Activated T-helper 1 cell treated with anti-CD3 and anti-CD28 coated beads, Interleukin-12 subunit alpha, Interleukin-12 subunit beta, Interleukin-2, Interleukin-4 antibody, amounts not matched to agents 30 ng/mL and 10 ng/mL and 1 ng/mL, durations not matched to agents 14 hours and 24 hours and 36 hours (primary cell): ENCODE measurements at regions of chr12 and their contacts with region 1.

Region 1: GRCh38 chr12:123075646-123076171 is 75.2 kb downstream of the PITPNM2 start:
- DNase-seq: peak; percentile 81
- H3K4me3 Mint-ChIP-seq: peak overlapping the region; percentile 86
- H3K27ac Mint-ChIP-seq: peak overlapping the region; percentile 99
- H3K4me1 Mint-ChIP-seq: peaks cover 57% of the 10 kb centered on the region
- H3K27me3 Mint-ChIP-seq: peaks cover 2% of the 10 kb centered on the region

Region 2: DNA sequence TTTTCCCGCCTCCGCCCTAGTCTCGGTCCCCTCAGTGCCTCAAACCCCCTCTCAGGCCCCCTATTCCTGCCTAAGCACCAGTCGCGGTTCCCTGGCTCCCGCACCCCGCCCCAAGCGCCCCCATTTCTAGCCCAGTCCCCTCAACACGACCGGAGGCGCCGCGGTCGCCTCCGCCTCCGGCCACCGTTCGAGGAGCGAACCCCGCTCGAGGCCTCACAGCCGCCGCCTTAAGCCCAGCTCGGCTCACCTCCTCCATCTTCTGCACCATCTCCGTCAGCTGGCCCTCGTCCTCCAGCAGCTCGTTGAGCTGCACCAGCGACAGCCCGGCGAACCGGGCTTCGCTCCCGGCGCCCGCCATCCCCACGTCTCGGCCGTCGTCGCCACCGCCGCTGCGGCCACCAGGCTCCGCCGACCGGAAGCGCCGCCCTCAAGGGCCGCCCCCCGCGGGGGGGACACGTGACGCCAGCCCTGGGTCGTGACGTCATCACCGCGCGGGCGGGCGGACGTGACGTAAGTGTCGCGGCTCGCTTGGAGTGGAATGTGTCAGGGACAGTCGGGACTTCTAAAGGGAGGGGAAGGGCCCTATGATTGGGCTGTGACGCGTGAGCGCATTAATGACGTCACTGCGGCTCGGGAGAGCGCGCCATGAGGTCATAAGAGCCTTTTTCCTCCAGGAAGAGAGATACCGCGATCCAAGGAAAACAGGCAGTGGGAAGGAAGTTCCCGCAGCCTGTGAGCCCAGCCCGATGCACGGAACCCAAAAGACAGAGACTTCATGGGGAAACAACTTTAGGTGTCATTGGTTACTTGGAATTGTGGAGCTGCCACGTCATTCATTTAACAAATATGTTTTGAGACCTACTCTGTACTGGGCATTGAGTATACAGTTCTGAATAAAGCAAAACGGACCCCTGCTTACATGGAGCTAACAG is 179.7 kb before region 1 on chr12 and contains the start of gene VPS37B:
- intact Hi-C with region 1: loop called (anchors 5 kb)
- DNase-seq: peak; percentile 87
- H3K4me3 Mint-ChIP-seq: peak within 1 kb of the TSS; percentile 91
- H3K27ac Mint-ChIP-seq: peak within 1 kb of the TSS; percentile 91
- H3K4me1 Mint-ChIP-seq: peaks cover 93% of the 10 kb centered on the region
- H3K27me3 Mint-ChIP-seq: peaks cover 5% of the 10 kb centered on the region
- total RNA-seq, gene VPS37B: 12.7 and 14.3 TPM in 2 replicates

Region 3: GRCh38 chr12:123024819-123025391 is 50.8 kb before region 1 on chr12:
- intact Hi-C with region 1: loop called (anchors 1 kb)
- DNase-seq: no peak
- H3K4me3 Mint-ChIP-seq: peak overlapping the region; percentile 9
- H3K27ac Mint-ChIP-seq: peak overlapping the region; percentile 62
- H3K4me1 Mint-ChIP-seq: peaks cover 17% of the 10 kb centered on the region
- H3K27me3 Mint-ChIP-seq: no peaks in the 10 kb centered on the region

Region 4: DNA sequence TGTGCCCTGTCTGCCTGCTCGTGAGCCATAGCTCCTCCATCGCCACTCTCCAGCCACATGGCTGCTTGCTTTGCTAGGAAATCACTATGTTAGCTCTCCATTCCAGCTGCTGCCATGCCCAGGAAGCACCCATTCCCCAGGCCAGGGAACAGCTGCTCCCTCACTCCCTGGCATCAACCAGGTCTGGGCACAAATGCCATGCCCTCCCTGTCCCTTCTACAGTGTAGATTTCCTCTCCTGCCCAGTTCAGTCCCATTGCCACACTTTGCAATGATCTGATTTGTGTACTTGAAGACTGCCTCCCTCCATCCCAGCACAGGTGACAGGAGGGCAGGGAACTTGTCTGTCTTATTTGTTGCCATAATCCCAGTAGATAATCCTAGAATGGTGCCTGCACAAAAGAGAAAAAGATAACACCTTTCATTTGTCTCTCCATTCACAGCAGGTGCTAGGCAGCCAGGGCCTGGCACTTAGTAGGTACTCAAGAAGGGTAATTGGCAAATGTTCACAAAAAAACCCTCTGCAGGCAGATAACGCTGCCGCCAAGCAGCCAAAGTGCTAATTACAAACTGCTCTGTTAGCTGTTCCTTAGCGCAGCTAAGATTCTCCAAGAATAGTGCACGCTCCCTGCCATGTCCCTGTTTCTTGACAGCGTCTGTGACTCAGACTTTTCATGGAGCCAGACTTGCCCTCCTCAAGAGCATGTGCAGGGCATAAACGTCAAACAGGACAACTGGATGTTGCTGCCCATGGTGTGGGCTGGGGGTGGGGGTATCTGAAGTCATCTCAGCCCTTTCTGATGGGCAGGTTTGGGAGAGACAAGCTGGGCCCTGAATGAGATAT is 26.1 kb before region 1 on chr12:
- intact Hi-C with region 1: no loop called
- DNase-seq: no peak
- H3K4me3 Mint-ChIP-seq: no peak overlapping the region
- H3K27ac Mint-ChIP-seq: no peak overlapping the region
- H3K4me1 Mint-ChIP-seq: peaks cover 19% of the 10 kb centered on the region
- H3K27me3 Mint-ChIP-seq: peaks cover 2% of the 10 kb centered on the region

Region 5: GRCh38 chr12:123106628-123107359 is 31.1 kb after region 1 on chr12:
- intact Hi-C with region 1: loop called (anchors 1 kb)
- DNase-seq: peak; percentile 73
- H3K4me3 Mint-ChIP-seq: peak overlapping the region; percentile 53
- H3K27ac Mint-ChIP-seq: peak overlapping the region; percentile 95
- H3K4me1 Mint-ChIP-seq: peaks cover 58% of the 10 kb centered on the region
- H3K27me3 Mint-ChIP-seq: no peaks in the 10 kb centered on the region

Region 6: DNA sequence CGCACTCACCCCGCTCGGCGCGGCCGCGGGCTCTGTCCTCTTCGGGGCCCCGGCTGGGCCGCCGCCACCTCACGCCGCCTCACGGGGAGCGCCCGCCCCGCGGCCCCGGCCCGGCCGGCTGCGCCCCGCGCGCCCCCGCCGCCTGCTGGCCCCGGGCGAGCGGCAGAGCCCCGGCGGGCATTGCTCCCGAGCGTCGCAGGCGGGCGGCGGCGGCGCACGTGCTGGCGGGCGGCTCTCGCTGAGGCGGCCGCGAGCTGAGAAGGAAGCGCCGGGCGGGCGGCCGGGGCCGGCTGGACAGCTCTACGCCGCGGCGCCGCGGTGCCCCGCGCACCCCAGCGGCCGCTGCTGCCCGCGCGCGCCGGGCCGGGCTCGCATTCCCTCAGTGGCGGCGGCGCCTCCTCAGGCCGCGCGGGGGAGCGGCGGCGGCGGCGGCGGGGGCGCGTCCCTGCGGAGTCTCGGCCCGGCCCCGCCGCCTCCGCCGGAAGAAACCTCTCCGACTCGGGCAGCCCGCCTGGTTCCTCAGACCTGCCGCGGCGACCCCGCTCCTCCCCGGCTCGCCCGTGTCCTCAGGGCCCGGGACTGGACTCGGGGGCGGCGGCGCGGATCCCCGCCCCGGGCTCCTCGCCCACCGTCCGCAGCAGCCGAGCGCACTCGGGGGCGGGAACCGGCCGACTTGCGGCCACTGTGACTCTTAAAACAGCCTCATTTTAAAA is 75.2 kb after region 1 on chr12 and contains the start of gene PITPNM2:
- intact Hi-C with region 1: loop called (anchors 1 kb)
- DNase-seq: peak; percentile 56
- H3K4me3 Mint-ChIP-seq: peak within 1 kb of the TSS; percentile 89
- H3K27ac Mint-ChIP-seq: peak within 1 kb of the TSS; percentile 90
- H3K4me1 Mint-ChIP-seq: peaks cover 41% of the 10 kb centered on the region
- H3K27me3 Mint-ChIP-seq: peaks cover 16% of the 10 kb centered on the region
- total RNA-seq, gene PITPNM2: 22.3 and 25.5 TPM in 2 replicates

Region 7: DNA sequence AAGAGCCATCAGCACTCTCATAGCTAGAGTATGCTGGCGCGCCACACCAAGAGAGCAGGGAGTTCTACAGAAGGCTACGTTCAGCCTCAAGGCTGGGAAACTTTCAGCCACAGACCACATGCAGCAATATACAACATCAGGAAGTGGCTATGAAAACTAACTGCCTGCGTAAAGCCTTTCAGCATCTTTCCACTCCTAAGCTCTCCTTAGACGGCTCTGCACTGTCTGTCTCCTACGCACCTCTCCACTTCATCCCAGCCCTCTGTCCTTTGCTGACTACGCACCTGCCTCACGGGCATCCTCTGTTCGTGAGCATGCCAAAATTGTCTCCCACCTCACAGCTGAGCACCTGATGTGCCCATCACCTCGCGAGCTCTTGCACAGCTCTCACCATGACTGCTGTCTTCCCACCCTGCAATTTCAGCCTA is 147.5 kb after region 1 on chr12:
- intact Hi-C with region 1: loop called (anchors 1 kb)
- DNase-seq: peak; percentile 65
- H3K4me3 Mint-ChIP-seq: peak overlapping the region; percentile 86
- H3K27ac Mint-ChIP-seq: peak overlapping the region; percentile 96
- H3K4me1 Mint-ChIP-seq: peaks cover 40% of the 10 kb centered on the region
- H3K27me3 Mint-ChIP-seq: no peaks in the 10 kb centered on the region